T-cell (primary cell): ENCODE measurements at regions of chr4 and their contacts with region 1.

Region 1: GRCh38 chr4:55546756-55547465 is at the start of gene CLOCK:
- DNase-seq: peak; percentile 59 to 91 (median 75)
- ATAC-seq: peak; percentile 73 to 76 (median 75)
- H3K4me3 ChIP-seq: peak within 1 kb of the TSS; percentile 65 to 83
- H3K4me3 Mint-ChIP-seq: peak within 1 kb of the TSS; percentile 91 to 95 (median 92)
- H3K27ac ChIP-seq: peak within 1 kb of the TSS; percentile 86
- H3K27ac Mint-ChIP-seq: peak within 1 kb of the TSS; percentile 93
- H3K4me1 ChIP-seq: peaks cover 5 to 12% of the 10 kb centered on the region in 2 experiments
- H3K4me1 Mint-ChIP-seq: peaks cover 35 to 54% (median 39%) of the 10 kb centered on the region in 3 donors
- H3K27me3 ChIP-seq: no peaks in the 10 kb centered on the region
- H3K27me3 Mint-ChIP-seq: no peaks in the 10 kb centered on the region
- total RNA-seq, gene CLOCK: 9.5 to 16.0 (median 11.6) TPM

Region 2: DNA sequence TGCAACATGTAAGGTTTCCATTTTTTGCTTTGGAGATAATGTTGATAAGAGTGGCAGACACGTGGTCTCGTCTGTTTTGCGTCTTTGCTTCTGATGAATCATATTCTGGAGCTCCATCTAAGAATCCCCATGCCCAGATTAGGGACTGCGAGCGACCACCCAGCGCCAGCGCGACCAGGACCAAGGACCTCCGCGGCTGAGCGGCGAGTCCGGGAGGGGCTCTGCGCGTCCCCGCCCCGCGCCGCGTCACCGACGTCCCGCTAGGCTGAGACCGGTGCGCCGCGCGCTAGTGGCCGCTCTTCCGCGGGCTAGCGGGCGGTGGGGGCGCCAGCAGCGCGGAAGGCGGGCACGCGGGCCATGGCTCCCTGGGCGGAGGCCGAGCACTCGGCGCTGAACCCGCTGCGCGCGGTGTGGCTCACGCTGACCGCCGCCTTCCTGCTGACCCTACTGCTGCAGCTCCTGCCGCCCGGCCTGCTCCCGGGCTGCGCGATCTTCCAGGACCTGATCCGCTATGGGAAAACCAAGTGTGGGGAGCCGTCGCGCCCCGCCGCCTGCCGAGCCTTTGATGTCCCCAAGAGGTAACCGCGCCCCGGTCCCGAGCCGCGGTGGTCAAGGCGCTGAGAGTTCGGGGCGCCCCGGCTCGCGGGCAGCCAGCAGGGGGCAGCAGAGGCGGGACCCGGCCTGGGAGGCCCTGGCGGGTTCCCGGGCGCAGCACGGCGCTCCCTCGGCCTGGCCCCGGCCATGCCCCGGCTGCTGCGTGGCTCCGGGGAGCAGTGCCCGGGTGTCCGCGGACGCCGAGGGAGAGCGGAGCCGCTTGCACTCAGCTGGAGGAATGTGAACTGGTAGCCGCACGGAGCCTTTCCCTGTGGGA is 200.7 kb before region 1 on chr4 and contains the start of gene SRD5A3:
- CTCF ChIA-PET with region 1: interaction called in 1 of 2 experiments, 11 read pairs
- POLR2A ChIA-PET with region 1: interaction called in 1 of 2 experiments, 4 read pairs
- DNase-seq: peak; percentile 13 to 84 (median 65)
- ATAC-seq: peak; percentile 91 to 94 (median 92)
- H3K4me3 ChIP-seq: peak within 1 kb of the TSS; percentile 67 to 72
- H3K4me3 Mint-ChIP-seq: peak within 1 kb of the TSS; percentile 76 to 89 (median 85)
- H3K27ac ChIP-seq: peak within 1 kb of the TSS; percentile 54
- H3K27ac Mint-ChIP-seq: peak within 1 kb of the TSS; percentile 81 to 85
- H3K4me1 ChIP-seq: peaks cover 0 to 11% of the 10 kb centered on the region in 2 experiments
- H3K4me1 Mint-ChIP-seq: peaks cover 10 to 19% (median 16%) of the 10 kb centered on the region in 3 donors
- H3K27me3 ChIP-seq: no peaks in the 10 kb centered on the region
- H3K27me3 Mint-ChIP-seq: no peaks in the 10 kb centered on the region
- total RNA-seq, gene SRD5A3: 3.6 to 6.8 (median 4.1) TPM

Region 3: GRCh38 chr4:56757821-56758411 is 1211.0 kb after region 1 on chr4:
- CTCF ChIA-PET with region 1: no interaction called
- POLR2A ChIA-PET with region 1: interaction called in 1 of 2 experiments, 13 read pairs
- DNase-seq: peak; percentile 11 to 72 (median 42)
- ATAC-seq: peak; percentile 82 to 89 (median 88)
- H3K4me3 ChIP-seq: peak overlapping the region; percentile 32 to 39
- H3K4me3 Mint-ChIP-seq: peak overlapping the region; percentile 72 to 81 (median 72)
- H3K27ac ChIP-seq: peak overlapping the region; percentile 76
- H3K27ac Mint-ChIP-seq: peak overlapping the region; percentile 96 to 99
- H3K4me1 ChIP-seq: peaks cover 26 to 34% of the 10 kb centered on the region in 2 experiments
- H3K4me1 Mint-ChIP-seq: peaks cover 57 to 72% (median 57%) of the 10 kb centered on the region in 3 donors
- H3K27me3 ChIP-seq: no peaks in the 10 kb centered on the region
- H3K27me3 Mint-ChIP-seq: no peaks in the 10 kb centered on the region